ENCODE measurements at regions of chr11 and their contacts with region 1.

Region 1: GRCh38 chr11:76207642-76208401 is 1.5 kb upstream of the WNT11 start:
- DNase-seq: peak; percentile 37 to 89 (median 70)
- ATAC-seq: peak; percentile 72 to 79 (median 74)
- H3K4me3 ChIP-seq: peak overlapping the region; percentile 63 to 82
- H3K4me3 Mint-ChIP-seq: peak overlapping the region; percentile 76 to 82 (median 81)
- H3K27ac ChIP-seq: no peak overlapping the region
- H3K27ac Mint-ChIP-seq: no peak overlapping the region
- H3K4me1 ChIP-seq: peaks cover 7 to 51% of the 10 kb centered on the region in 2 experiments
- H3K4me1 Mint-ChIP-seq: peaks cover 17 to 26% (median 19%) of the 10 kb centered on the region in 3 donors
- H3K27me3 ChIP-seq: peaks cover 3 to 90% of the 10 kb centered on the region in 2 experiments
- H3K27me3 Mint-ChIP-seq: peaks cover 28 to 51% of the 10 kb centered on the region in 2 donors

Region 2: DNA sequence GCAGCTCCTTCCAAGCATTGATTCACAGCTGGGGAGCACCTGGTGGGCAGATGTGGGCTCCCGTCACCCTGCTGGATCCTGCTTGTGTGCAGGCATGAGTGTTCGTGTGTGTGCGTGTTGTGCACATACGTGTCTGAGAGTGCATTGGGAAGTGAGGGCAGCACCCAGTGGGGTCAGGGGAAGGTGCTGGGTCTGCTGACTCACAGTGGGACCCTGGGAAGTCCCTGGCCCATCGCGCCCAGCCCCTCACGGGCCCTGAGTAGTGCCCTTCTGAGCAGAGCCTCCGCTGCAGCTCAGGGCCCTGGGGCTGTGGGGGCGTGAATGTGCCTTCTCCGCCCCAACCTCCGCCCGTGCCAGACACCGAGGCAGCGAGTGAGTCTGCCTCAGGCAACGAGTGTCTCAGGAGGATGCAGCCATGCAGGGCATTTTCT is 38.3 kb before region 1 on chr11:
- CTCF ChIA-PET with region 1: no interaction called
- POLR2A ChIA-PET with region 1: no interaction called
- DNase-seq: no peak
- ATAC-seq: no peak
- H3K4me3 ChIP-seq: no peak overlapping the region
- H3K4me3 Mint-ChIP-seq: no peak overlapping the region
- H3K27ac ChIP-seq: no peak overlapping the region
- H3K27ac Mint-ChIP-seq: no peak overlapping the region
- H3K4me1 ChIP-seq: no peaks in the 10 kb centered on the region
- H3K4me1 Mint-ChIP-seq: no peaks in the 10 kb centered on the region
- H3K27me3 ChIP-seq: peaks cover 0 to 10% of the 10 kb centered on the region in 2 experiments
- H3K27me3 Mint-ChIP-seq: no peaks in the 10 kb centered on the region

Region 3: DNA sequence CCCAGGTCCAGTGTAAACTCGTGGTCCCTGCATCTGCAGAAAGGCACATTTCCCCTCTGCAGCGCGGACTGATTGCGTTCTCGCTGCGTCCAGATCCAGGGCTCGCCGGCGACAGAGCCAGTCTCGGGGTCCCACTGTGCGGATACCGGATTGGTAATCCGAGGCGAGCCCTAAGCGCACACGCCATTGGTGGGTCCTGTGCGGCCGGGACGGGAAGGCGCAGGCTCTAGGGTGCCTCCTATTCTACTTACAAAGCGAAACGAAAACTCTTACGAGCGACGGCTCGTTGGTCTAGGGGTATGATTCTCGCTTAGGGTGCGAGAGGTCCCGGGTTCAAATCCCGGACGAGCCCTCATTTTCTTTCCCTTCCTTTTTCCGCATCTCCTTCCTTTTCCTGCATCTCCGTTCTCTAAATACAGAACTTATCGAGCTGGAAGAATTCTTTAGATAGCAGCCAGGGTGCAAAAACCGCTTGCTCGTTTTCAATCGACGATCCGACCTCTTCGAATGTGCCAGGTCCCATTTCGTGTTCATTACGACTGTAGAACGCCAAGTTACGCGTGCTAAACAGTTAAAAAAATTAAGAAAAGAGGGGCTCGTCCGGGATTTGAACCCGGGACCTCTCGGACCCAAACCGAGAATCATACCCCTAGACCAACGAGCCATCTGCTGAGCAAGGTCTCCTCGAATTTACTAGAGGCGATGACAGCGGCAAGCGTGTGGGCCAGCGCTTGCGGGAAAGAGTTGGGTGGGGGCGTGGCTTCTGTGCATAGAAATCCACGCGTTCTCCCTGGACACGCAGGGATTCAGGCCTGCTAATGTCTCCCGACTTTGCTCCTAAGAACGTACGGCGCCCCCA is 27.6 kb after region 1 on chr11:
- CTCF ChIA-PET with region 1: interaction called, 13 to 15 read pairs
- POLR2A ChIA-PET with region 1: interaction called, 3 to 4 read pairs
- DNase-seq: peak; percentile 72 to 95 (median 86)
- ATAC-seq: peak; percentile 79 to 88 (median 82)
- H3K4me3 ChIP-seq: peak overlapping the region; percentile 84 to 93
- H3K4me3 Mint-ChIP-seq: peak overlapping the region; percentile 90 to 93 (median 93)
- H3K27ac ChIP-seq: peak overlapping the region; percentile 35
- H3K27ac Mint-ChIP-seq: peak overlapping the region; percentile 92
- H3K4me1 ChIP-seq: peaks cover 21 to 58% of the 10 kb centered on the region in 2 experiments
- H3K4me1 Mint-ChIP-seq: peaks cover 40 to 64% (median 54%) of the 10 kb centered on the region in 3 donors
- H3K27me3 ChIP-seq: peaks cover 0 to 2% of the 10 kb centered on the region in 2 experiments
- H3K27me3 Mint-ChIP-seq: peaks cover 0 to 6% of the 10 kb centered on the region in 2 donors

Region 4: DNA sequence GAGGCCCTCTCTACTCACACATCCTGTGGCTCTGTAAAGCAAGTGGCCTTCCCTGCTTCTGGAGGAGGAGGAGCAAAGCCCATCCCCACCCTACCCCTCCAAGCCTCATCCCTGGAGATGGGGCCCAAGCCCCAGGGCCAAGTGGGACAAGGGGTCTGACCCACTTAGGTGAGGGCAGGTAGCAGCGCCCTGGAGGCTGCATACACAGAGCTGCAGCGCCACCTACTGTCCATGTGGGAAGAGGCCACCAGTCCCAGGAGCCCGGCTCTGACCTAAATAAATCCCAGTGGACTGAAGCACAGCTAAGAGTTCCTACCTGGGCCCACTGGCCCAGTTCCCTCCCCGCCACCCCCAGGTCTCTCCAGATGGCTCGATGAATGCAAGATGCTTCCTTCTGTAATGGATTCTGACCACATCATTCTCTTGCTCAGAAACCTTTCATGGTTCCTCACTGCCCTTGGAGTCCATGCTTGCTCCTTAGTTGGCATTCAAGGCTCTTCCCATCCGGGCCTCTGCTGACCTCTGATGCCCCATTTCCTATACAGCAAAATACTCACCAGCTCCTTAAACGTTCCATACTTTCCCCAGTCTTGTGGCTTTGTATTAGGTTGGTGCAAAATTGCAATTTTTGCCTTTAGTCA is 111.0 kb after region 1 on chr11:
- CTCF ChIA-PET with region 1: interaction called, 22 to 26 read pairs
- POLR2A ChIA-PET with region 1: no interaction called
- DNase-seq: peak; percentile 51 to 94 (median 80)
- ATAC-seq: peak; percentile 90 to 100 (median 92)
- H3K4me3 ChIP-seq: no peak overlapping the region
- H3K4me3 Mint-ChIP-seq: no peak overlapping the region
- H3K27ac ChIP-seq: no peak overlapping the region
- H3K27ac Mint-ChIP-seq: no peak overlapping the region
- H3K4me1 ChIP-seq: peaks cover 0 to 6% of the 10 kb centered on the region in 2 experiments
- H3K4me1 Mint-ChIP-seq: peaks cover 0 to 10% (median 5%) of the 10 kb centered on the region in 3 donors
- H3K27me3 ChIP-seq: peaks cover 0 to 54% of the 10 kb centered on the region in 2 experiments
- H3K27me3 Mint-ChIP-seq: peaks cover 35 to 40% of the 10 kb centered on the region in 2 donors